ENCODE measurements at regions of chr12 and their contacts with region 1.

Region 1: DNA sequence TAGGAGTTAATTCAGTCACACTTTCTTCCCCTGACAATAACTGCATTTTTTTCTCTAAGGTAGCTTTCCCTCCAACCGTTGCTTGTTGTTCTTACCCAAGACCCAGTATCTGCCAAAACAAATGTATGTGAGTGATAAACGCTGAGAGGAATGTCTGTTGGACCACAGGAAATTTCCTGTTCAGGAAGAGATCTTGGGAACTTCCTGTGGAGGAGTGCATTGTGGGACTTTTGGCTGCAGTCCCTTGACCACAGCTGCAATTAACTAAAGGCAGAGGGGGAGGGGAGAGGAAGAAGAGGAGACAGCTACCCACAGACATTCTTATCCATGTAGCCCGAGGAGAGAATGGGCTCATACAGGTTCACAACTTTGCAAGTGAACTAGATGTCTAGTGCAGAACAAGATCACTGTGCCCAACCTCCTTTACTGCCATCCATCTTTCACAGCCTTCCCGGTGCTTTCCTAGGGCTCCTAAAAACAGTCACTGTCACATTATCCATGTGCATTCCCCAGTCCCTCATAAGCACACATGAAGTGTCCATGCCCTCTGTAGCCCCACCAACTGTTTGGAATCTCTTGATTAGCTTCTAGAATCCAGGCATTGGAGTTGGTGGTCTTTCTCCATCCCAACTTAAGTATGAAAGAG is 149.5 kb downstream of the ETV6 start:
- DNase-seq: peak; percentile 98
- H3K4me3 ChIP-seq: no peak overlapping the region
- H3K27ac ChIP-seq: peak overlapping the region; percentile 99
- H3K4me1 ChIP-seq: peaks cover 75% of the 10 kb centered on the region
- H3K27me3 ChIP-seq: no peaks in the 10 kb centered on the region
- CTCF ChIP-seq: no peak
- POLR2A ChIP-seq: peak; percentile 84

Region 2: GRCh38 chr12:11162502-11162901 is 636.5 kb before region 1 on chr12:
- CTCF ChIA-PET with region 1: no interaction called
- POLR2A ChIA-PET with region 1: no interaction called
- dilution Hi-C with region 1: no loop called
- intact Hi-C with region 1: no loop called
- DNase-seq: no peak
- H3K4me3 ChIP-seq: no peak overlapping the region
- H3K27ac ChIP-seq: no peak overlapping the region
- H3K4me1 ChIP-seq: no peaks in the 10 kb centered on the region
- H3K27me3 ChIP-seq: no peaks in the 10 kb centered on the region
- CTCF ChIP-seq: no peak
- POLR2A ChIP-seq: no peak

Region 3: GRCh38 chr12:11673666-11674461 is 125.1 kb before region 1 on chr12:
- CTCF ChIA-PET with region 1: interaction called, 3 read pairs
- POLR2A ChIA-PET with region 1: no interaction called
- dilution Hi-C with region 1: no loop called
- intact Hi-C with region 1: loop called (anchors 2 kb)
- DNase-seq: peak; percentile 76
- H3K4me3 ChIP-seq: peak overlapping the region in 1 of 3 experiments; percentile 18
- H3K27ac ChIP-seq: peak overlapping the region; percentile 55
- H3K4me1 ChIP-seq: peaks cover 37% of the 10 kb centered on the region
- H3K27me3 ChIP-seq: no peaks in the 10 kb centered on the region
- CTCF ChIP-seq: no peak
- POLR2A ChIP-seq: no peak

Region 4: DNA sequence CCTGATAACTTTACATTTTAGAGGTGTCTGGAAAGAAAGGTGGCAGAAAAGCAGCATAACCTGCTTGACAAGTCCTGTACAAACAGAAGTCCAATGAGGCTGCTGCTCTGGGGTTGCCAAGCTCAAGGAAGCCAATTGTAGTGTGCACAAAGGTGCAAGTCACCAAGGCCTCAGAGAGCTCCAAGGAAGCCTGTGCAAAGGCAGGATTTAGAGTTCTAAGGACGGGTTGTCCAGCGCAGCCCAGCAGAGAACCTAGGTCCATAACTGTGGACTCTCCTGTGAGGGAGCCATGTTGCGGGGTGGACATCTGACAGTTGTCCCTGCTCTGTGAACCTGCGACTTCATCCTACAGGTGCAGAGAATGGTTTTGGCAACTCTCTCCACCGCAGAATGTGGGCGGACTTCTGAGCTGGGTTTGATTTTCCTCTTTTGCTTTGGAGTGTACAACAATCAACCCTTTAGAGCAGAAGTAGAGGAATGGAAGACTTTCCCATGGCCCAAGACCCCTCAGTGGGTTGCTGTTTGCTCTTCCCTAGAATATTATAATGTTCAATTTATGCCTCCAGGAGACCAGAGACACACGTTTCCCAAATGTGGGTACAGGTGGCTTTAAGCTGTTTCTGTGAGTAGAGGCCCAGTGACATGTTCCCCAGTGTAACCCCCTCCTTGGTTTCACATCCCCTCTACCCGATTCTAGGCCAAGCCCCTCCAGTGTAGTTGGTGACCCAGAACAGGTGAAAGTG is 68.5 kb before region 1 on chr12:
- CTCF ChIA-PET with region 1: no interaction called
- POLR2A ChIA-PET with region 1: no interaction called
- dilution Hi-C with region 1: no loop called
- intact Hi-C with region 1: loop called (anchors 2 kb)
- DNase-seq: no peak
- H3K4me3 ChIP-seq: no peak overlapping the region
- H3K27ac ChIP-seq: peak overlapping the region; percentile 91
- H3K4me1 ChIP-seq: peaks cover 43% of the 10 kb centered on the region
- H3K27me3 ChIP-seq: no peaks in the 10 kb centered on the region
- CTCF ChIP-seq: no peak
- POLR2A ChIP-seq: no peak

Region 5: GRCh38 chr12:11765817-11766794 is 32.9 kb before region 1 on chr12:
- CTCF ChIA-PET with region 1: interaction called, 5 read pairs
- POLR2A ChIA-PET with region 1: interaction called, 3 read pairs
- dilution Hi-C with region 1: no loop called
- intact Hi-C with region 1: loop called (anchors 1 kb)
- DNase-seq: peak; percentile 78
- H3K4me3 ChIP-seq: no peak overlapping the region
- H3K27ac ChIP-seq: peak overlapping the region; percentile 85
- H3K4me1 ChIP-seq: peaks cover 41% of the 10 kb centered on the region
- H3K27me3 ChIP-seq: no peaks in the 10 kb centered on the region
- CTCF ChIP-seq: no peak
- POLR2A ChIP-seq: peak; percentile 53

Region 6: GRCh38 chr12:11836282-11837151 is 37.5 kb after region 1 on chr12:
- CTCF ChIA-PET with region 1: interaction called, 3 read pairs
- POLR2A ChIA-PET with region 1: no interaction called
- dilution Hi-C with region 1: no loop called
- intact Hi-C with region 1: loop called (anchors 1 kb)
- DNase-seq: no peak
- H3K4me3 ChIP-seq: no peak overlapping the region
- H3K27ac ChIP-seq: no peak overlapping the region
- H3K4me1 ChIP-seq: peaks cover 49% of the 10 kb centered on the region
- H3K27me3 ChIP-seq: no peaks in the 10 kb centered on the region
- CTCF ChIP-seq: no peak
- POLR2A ChIP-seq: no peak

Region 7: GRCh38 chr12:11885261-11886038 is 86.5 kb after region 1 on chr12:
- CTCF ChIA-PET with region 1: interaction called, 4 read pairs
- POLR2A ChIA-PET with region 1: interaction called, 5 read pairs
- dilution Hi-C with region 1: no loop called
- intact Hi-C with region 1: loop called (anchors 1 kb)
- DNase-seq: peak; percentile 95
- H3K4me3 ChIP-seq: peak overlapping the region in 1 of 3 experiments; percentile 9
- H3K27ac ChIP-seq: peak overlapping the region; percentile 92
- H3K4me1 ChIP-seq: peaks cover 49% of the 10 kb centered on the region
- H3K27me3 ChIP-seq: no peaks in the 10 kb centered on the region
- CTCF ChIP-seq: no peak
- POLR2A ChIP-seq: peak; percentile 51

Region 8: DNA sequence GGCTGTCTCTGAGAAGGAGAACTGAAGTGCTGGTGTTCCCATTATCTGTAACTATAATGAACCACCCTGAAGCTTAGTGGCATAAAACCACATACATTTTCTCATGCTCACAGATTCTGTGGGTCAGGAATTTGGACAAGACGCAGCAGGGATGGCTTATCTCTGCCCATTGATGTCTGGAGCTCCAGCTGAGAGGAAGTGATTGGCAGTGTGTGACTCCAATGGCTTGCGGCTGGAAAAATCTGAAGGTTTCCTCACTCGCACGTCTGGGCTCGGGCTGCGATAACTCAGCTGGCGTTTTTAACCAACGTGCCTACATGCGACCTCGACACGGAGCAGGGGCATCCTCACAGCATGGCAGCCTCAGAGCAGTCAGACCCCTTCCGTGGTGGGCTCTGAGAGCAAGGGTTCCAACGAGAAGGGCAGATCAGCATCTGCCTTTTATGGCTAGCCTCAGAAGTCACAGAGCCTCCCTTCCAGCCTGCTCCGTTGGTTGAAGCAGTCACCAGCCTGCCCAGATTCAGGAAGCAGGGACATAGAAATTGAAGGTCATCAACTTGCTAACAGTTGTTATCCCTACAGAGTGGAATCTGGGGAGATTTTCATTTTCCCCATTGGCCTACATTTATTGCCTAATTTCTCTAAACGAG is 128.4 kb after region 1 on chr12:
- CTCF ChIA-PET with region 1: no interaction called
- POLR2A ChIA-PET with region 1: no interaction called
- dilution Hi-C with region 1: no loop called
- intact Hi-C with region 1: no loop called
- DNase-seq: no peak
- H3K4me3 ChIP-seq: no peak overlapping the region
- H3K27ac ChIP-seq: no peak overlapping the region
- H3K4me1 ChIP-seq: no peaks in the 10 kb centered on the region
- H3K27me3 ChIP-seq: peaks cover 0 to 16% of the 10 kb centered on the region in 2 experiments
- CTCF ChIP-seq: no peak
- POLR2A ChIP-seq: no peak